Left colon (tissue), 2 donors: ENCODE measurements at regions of chr11 and their contacts with region 1.

Region 1: DNA sequence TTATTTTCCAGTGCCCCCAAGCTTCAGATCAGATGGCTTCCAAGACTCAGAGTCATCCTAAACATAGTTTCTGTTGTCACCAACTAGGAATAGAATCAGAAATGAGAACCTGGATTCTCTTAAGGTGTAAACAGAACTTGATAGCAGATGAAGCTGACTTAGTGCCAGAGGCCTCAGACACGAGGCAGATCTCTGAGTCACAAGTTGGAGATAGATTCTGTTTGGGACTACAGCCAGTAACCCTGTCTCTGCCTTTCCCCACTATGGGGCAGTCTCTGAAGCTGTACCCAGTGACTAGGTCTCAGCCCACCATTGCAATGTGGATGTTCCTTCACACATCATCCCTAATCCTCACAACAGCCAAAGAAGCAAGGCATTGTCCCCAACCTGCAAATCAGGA is 25.4 kb downstream of the NEU3 start:
- DNase-seq: no peak
- ATAC-seq: no peak

Region 2: GRCh38 chr11:74992852-74993251 is 21.3 kb before region 1 on chr11:
- intact Hi-C with region 1: no loop called
- DNase-seq: no peak
- ATAC-seq: no peak

Region 3: GRCh38 chr11:75233742-75234172 is 219.6 kb after region 1 on chr11:
- intact Hi-C with region 1: loop called in 1 of 2 experiments (anchors 10 kb)
- DNase-seq: no peak
- ATAC-seq: no peak

Region 4: GRCh38 chr11:76008474-76008873 is 994.3 kb after region 1 on chr11:
- intact Hi-C with region 1: no loop called
- DNase-seq: no peak
- ATAC-seq: no peak